T-cell (primary cell): ENCODE measurements at regions of chr2 and their contacts with region 1.

Region 1: DNA sequence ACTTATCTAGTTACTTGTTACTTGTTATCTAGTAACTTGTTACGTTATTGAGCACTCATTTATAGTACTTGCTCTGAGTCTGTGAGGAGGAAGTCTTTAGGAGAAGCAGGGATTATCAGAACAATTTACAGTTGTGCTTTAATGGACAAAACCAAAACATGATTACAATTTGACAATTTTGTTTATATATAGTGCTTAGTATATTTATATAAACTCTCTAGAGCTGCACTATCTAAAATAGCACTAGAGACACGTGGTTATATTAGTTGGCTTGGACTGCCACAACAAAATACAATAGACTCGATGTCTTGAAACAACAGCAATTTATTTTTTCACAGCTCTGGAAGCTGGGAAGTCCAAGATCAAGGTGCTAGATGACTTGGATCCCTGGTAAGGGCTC is 78.4 kb downstream of the BMPR2 start:
- DNase-seq: no peak
- ATAC-seq: no peak
- H3K4me3 ChIP-seq: no peak overlapping the region
- H3K4me3 Mint-ChIP-seq: no peak overlapping the region
- H3K27ac ChIP-seq: no peak overlapping the region
- H3K27ac Mint-ChIP-seq: no peak overlapping the region
- H3K4me1 ChIP-seq: no peaks in the 10 kb centered on the region
- H3K4me1 Mint-ChIP-seq: peaks cover 0 to 2% (median 0%) of the 10 kb centered on the region in 3 donors
- H3K27me3 ChIP-seq: no peaks in the 10 kb centered on the region
- H3K27me3 Mint-ChIP-seq: no peaks in the 10 kb centered on the region

Region 2: GRCh38 chr2:202982779-202983491 is 528.4 kb after region 1 on chr2:
- CTCF ChIA-PET with region 1: interaction called in 1 of 2 experiments, 13 read pairs
- POLR2A ChIA-PET with region 1: no interaction called
- DNase-seq: no peak
- ATAC-seq: no peak
- H3K4me3 ChIP-seq: no peak overlapping the region
- H3K4me3 Mint-ChIP-seq: no peak overlapping the region
- H3K27ac ChIP-seq: no peak overlapping the region
- H3K27ac Mint-ChIP-seq: no peak overlapping the region
- H3K4me1 ChIP-seq: no peaks in the 10 kb centered on the region
- H3K4me1 Mint-ChIP-seq: no peaks in the 10 kb centered on the region
- H3K27me3 ChIP-seq: no peaks in the 10 kb centered on the region
- H3K27me3 Mint-ChIP-seq: no peaks in the 10 kb centered on the region

Region 3: DNA sequence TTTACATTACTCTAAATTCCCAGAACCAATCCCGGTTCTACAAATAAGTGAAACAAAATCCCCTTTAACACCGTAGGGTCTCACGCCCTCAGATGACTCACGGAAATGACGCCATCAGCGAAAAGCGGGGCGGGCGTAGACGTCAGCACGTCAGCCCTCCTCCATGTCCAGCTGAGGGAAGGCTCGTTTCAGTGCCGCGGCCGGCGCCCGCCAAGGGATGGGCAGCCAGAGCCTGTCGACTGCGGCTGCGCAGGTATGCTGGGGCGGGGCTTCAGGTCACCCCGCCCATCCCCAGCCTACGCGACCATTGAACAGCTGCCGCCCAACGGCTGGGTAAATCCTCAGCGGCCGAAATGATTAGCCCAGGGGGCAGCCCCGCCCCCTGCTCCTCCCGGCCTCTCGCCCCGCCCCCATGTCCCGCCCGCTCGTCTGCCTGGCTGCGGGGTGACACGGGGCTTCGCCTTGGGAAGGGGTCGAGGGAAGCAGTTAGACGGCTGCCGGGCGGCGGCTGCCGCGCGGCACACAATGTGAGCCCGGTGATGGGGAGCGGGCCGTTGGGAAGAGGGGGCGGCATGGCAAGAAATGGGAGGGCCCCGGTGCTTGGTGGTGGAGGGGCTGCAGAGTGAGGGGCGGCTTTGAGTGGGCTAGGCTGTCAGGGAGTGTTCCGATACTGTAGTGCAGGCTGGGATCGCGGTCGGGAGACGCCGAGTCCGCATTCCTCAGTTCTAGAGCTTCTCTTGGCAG is 560.1 kb after region 1 on chr2 and contains the start of gene NBEAL1:
- CTCF ChIA-PET with region 1: no interaction called
- POLR2A ChIA-PET with region 1: no interaction called
- DNase-seq: peak; percentile 86 to 98 (median 92)
- ATAC-seq: peak; percentile 89 to 95 (median 94)
- H3K4me3 ChIP-seq: peak within 1 kb of the TSS; percentile 91
- H3K4me3 Mint-ChIP-seq: peak within 1 kb of the TSS; percentile 86 to 92 (median 88)
- H3K27ac ChIP-seq: peak within 1 kb of the TSS; percentile 92
- H3K27ac Mint-ChIP-seq: peak within 1 kb of the TSS; percentile 86 to 88
- H3K4me1 ChIP-seq: peaks cover 2 to 15% of the 10 kb centered on the region in 2 experiments
- H3K4me1 Mint-ChIP-seq: peaks cover 39 to 50% (median 44%) of the 10 kb centered on the region in 3 donors
- H3K27me3 ChIP-seq: no peaks in the 10 kb centered on the region
- H3K27me3 Mint-ChIP-seq: no peaks in the 10 kb centered on the region
- total RNA-seq, gene NBEAL1: 11.0 to 17.9 (median 14.3) TPM